Activated T-helper 2 cell treated with anti-CD3 and anti-CD28 coated beads, Interferon-gamma antibody, Interleukin-2, Interleukin-4, amounts not matched to agents 10 μg/mL and 5 μg/mL and 100 μg/mL, durations not matched to agents 14 hours and 24 hours and 36 hours (primary cell): ENCODE measurements at regions of chr2 and their contacts with region 1.

Region 1: DNA sequence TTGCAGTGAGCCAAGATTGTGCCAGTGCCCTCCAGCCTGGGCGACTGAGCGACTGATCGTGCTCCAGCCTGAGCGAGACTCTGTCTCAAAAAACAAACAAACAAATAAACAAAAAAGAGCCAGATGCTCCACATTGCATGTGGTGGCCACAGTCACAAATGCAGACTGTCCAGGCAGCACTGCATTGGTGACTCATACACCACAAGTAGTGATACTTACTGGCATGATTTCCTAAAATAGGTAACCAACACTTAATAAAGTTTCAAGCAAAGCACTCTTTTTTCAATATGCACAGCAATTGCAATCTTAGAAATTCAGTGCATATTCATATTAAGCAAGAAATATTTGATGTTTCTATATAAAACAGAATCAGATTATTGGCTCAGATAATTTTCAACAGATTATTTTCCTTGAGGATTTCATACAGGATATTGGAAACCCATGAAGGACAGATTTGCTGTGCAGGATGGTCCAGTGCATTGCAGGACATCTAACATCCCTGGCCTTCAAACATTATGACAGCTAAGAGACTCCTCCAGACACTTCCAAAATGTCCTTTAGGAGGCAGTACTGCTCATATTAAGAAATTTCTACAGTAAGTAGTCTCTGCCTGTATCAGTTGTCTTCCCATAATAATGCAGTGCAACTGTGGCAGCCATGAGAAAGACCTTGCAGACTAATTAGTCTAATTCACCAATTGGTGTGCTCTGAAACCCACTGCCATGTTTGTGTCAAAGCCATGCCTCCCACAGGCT is 10.5 kb upstream of the SLC1A4 start:
- DNase-seq: no peak
- H3K4me3 Mint-ChIP-seq: no peak overlapping the region
- H3K27ac Mint-ChIP-seq: no peak overlapping the region
- H3K4me1 Mint-ChIP-seq: peaks cover 49% of the 10 kb centered on the region
- H3K27me3 Mint-ChIP-seq: peaks cover 10% of the 10 kb centered on the region

Region 2: GRCh38 chr2:64945973-64946768 is 32.5 kb before region 1 on chr2:
- intact Hi-C with region 1: loop called (anchors 1 kb)
- DNase-seq: peak; percentile 75
- H3K4me3 Mint-ChIP-seq: peak overlapping the region; percentile 77
- H3K27ac Mint-ChIP-seq: peak overlapping the region; percentile 98
- H3K4me1 Mint-ChIP-seq: peaks cover 60% of the 10 kb centered on the region
- H3K27me3 Mint-ChIP-seq: no peaks in the 10 kb centered on the region

Region 3: GRCh38 chr2:65040400-65041261 is 61.9 kb after region 1 on chr2:
- intact Hi-C with region 1: loop called (anchors 1 kb)
- DNase-seq: peak; percentile 69
- H3K4me3 Mint-ChIP-seq: no peak overlapping the region
- H3K27ac Mint-ChIP-seq: no peak overlapping the region
- H3K4me1 Mint-ChIP-seq: peaks cover 20% of the 10 kb centered on the region
- H3K27me3 Mint-ChIP-seq: no peaks in the 10 kb centered on the region